Right ventricle myocardium superior (tissue), 1 donor: ENCODE measurements at regions of chr1 and their contacts with region 1.

Region 1: GRCh38 chr1:162056043-162056442 is 13.4 kb upstream of the NOS1AP start:
- DNase-seq: peak; percentile 52
- ATAC-seq: peak; percentile 97

Region 2: DNA sequence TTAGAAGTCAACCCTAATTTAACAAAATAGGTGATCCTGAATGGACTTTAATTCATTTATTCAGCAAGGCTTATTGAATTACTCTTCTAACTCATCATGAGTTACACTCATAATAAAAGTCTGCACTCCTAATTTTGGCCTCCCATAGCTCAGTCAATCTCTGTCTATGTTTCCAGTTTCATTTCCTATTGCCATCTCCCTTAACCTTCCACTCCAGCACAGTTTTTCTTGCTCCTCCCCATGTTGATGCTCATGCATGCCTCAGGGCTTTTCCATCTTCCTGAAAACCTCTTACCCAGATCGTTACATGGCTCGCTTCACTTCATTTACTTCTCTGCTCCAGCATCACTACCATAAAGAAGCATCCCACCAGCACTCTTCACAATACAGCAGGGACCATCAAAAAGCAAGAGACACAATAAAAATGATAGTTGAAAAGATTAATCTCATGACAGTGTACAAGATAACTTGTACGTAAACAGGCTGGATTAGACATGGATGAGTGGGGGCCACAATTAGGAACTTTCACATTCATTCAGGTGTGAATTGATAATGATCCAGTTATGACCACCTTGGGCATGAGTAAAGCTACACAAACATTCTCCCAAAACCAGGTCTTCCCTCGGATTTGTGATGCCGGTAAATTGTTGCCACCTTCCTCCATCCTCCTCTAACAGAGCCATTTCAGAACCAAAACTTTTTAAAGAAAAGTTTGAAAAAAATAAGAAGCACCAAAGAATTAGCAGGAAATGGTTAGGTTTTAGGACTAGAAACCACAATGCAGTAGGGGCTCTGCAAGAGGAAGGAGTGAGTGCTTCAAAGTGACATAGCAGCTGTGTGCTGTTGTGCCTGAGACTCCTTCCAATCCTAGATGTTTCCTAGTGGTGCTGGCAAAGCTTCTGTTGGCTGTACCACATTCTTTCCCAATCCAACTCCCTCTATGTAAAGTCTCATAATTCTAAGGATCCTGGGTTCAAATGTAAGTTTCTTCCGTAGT is 122.2 kb before region 1 on chr1:
- intact Hi-C with region 1: no loop called
- DNase-seq: no peak
- ATAC-seq: peak; percentile 38

Region 3: DNA sequence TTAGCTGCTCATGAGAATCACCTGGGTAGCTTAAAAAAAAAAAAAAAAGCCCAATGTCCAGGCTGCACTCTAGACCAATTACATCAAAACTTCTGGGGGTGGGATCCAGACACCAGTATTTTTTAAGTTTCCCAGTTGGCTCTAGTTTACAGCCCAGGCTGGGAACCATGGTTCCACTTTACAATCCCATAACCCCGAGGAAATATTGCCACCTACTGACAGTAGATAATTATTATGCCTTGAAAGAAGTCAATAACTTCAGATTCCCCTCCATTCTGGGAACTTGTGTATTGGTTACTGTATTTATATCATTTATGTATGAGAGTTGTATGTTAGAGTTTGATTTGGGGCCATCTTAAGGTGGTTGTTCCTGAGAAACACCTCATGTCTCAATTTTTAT is 220.4 kb after region 1 on chr1:
- intact Hi-C with region 1: loop called (anchors 5 kb)
- DNase-seq: no peak
- ATAC-seq: no peak

Region 4: DNA sequence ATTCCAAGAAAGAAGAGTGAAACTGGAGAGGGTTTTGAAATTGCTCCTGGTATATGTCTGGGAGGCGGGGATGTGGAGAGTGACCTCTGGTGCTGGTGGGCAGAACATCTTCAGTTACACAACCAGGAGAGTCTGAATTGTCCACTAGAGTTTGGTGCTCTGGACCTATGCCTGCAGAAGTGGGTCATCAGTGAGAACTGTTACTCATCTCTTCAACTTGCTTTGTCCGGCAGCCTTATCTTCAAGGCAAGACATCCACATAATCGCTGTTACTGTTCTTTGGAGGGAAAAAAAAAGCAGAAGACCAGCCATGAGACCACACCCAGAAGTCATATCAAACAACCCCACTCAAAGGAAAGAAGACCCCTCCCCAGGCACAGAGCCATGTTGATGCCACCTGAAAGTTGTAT is 341.0 kb after region 1 on chr1:
- intact Hi-C with region 1: loop called (anchors 5 kb)
- DNase-seq: no peak
- ATAC-seq: no peak

Region 5: DNA sequence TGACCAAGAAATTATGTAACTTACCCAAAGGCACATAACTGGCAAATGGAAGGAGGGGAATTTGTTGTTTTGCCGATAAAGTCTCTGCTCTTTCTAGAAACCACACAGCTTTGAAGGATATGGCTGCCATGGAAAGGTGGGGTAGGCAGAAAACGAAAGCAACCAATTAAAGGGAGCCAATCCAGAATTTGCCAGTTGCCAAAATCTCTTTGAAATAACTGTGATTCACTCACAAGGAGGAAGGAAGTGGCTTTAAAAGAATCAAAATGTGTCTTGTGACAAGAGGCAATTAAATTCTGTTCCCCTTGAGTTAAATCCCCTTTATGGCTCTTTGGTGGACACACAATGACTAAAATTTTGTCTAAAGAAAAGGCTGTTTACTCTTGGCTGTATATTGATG is 866.2 kb after region 1 on chr1:
- intact Hi-C with region 1: no loop called
- DNase-seq: no peak
- ATAC-seq: no peak